ENCODE measurements at regions of chr1 and their contacts with region 1.

Region 1: DNA sequence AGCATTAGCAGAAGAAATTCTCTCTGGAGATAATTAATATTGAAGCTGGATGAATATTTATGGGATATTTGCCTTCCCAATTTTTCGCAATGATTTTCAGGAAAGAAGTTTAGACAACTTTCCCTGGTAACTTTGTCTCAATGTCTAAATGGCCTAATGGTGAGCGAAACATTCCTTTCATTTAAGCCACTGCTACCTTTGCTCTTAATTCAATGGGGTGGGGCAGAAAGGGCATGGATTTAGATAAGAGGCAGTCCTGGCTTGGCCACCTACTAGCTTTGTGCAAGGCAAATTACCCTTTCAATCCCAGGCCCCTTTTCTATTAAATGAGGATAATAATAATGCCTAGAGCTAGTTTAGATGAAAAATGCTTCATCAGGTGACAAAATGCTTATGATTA is 27.1 kb upstream of the LYST start:
- DNase-seq: no peak
- ATAC-seq: no peak
- H3K4me3 ChIP-seq: no peak overlapping the region
- H3K27ac ChIP-seq: no peak overlapping the region
- H3K4me1 ChIP-seq: no peaks in the 10 kb centered on the region
- H3K27me3 ChIP-seq: peaks cover 8% of the 10 kb centered on the region
- CTCF ChIP-seq: no peak
- POLR2A ChIP-seq: no peak
- RAD21 ChIP-seq: no peak

Region 2: DNA sequence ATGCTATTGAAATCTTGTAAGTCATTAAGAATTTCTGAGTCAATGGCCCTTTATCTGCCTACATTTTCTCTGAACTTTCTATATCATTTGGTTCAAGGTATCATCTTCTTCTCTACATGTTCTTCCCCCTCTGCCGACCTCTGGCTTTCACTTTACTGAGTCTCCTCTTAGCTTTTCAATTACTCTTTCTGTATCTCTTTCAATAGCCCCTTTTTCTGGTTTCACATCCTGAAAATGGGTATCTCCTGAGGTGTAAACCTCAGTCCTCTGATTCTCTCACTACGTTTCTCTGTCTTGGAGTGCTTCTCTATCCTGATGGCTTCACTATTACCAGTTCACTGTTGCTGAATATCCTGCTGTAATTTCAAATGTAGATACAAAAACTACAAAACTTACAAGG is 126.0 kb before region 1 on chr1:
- CTCF ChIA-PET with region 1: no interaction called
- POLR2A ChIA-PET with region 1: no interaction called
- dilution Hi-C with region 1: no loop called
- in situ Hi-C with region 1: no loop called
- intact Hi-C with region 1: no loop called
- DNase-seq: no peak
- ATAC-seq: no peak
- H3K4me3 ChIP-seq: no peak overlapping the region
- H3K27ac ChIP-seq: no peak overlapping the region
- H3K4me1 ChIP-seq: no peaks in the 10 kb centered on the region
- H3K27me3 ChIP-seq: no peaks in the 10 kb centered on the region
- CTCF ChIP-seq: no peak
- POLR2A ChIP-seq: no peak
- RAD21 ChIP-seq: no peak

Region 3: GRCh38 chr1:235883261-235883927 is 10.4 kb before region 1 on chr1:
- CTCF ChIA-PET with region 1: no interaction called
- POLR2A ChIA-PET with region 1: interaction called, 11 read pairs
- dilution Hi-C with region 1: no loop called
- in situ Hi-C with region 1: no loop called
- intact Hi-C with region 1: no loop called
- DNase-seq: peak; percentile 97
- ATAC-seq: peak; percentile 91
- H3K4me3 ChIP-seq: peak overlapping the region; percentile 1; the same call in 1 of the 2 replicates
- H3K27ac ChIP-seq: no peak overlapping the region; the same call in 1 of the 2 replicates
- H3K4me1 ChIP-seq: peaks cover 5% of the 10 kb centered on the region
- H3K27me3 ChIP-seq: peaks cover 4% of the 10 kb centered on the region; the same call in 1 of the 2 replicates
- CTCF ChIP-seq: no peak
- POLR2A ChIP-seq: no peak
- RAD21 ChIP-seq: no peak